PC-3 (cell line): ENCODE measurements at regions of chr12 and their contacts with region 1.

Region 1: DNA sequence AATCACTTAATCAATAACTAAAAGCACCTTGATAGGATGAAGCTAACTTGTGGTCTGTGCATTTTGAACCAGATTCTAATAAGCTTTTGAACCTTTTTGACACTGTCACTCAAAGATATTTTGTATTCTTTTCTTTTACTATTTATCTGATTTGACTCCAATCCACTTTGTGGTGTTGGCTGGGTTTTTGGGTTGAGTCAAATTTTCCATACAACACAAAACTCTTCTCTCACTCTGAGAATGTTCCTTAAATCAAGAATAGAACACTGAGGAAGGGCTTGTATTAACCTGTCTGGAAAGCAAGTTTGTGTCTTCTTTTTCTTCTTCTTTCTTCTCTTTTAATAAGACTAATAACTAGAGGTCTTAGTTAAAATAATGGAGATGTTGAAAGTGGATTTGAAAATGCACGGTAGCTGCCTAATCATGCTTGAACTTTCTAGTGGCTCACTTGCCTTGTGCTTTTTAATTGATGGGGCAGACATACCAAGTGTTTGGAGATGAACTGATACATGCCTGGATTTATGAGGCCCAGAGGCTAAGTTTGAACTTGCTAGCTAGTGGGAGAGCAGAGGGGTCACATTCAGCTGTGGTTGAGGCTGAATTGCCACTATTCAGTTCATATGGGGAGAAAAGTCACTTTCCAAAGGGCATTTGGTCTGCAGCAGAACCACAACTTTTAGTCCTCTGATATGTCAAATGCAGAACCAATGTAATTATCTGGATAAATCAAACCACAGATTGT is 93.5 kb upstream of the PTHLH start:
- DNase-seq: no peak
- ATAC-seq: no peak
- H3K4me3 ChIP-seq: no peak overlapping the region
- H3K27ac ChIP-seq: no peak overlapping the region
- H3K4me1 ChIP-seq: no peaks in the 10 kb centered on the region
- H3K27me3 ChIP-seq: no peaks in the 10 kb centered on the region
- CTCF ChIP-seq: no peak

Region 2: GRCh38 chr12:27984275-27984674 is 81.8 kb before region 1 on chr12:
- CTCF ChIA-PET with region 1: no interaction called
- POLR2A ChIA-PET with region 1: no interaction called
- intact Hi-C with region 1: loop called (anchors 2 kb)
- DNase-seq: peak; percentile 100
- ATAC-seq: peak; percentile 54
- H3K4me3 ChIP-seq: peak overlapping the region; percentile 6
- H3K27ac ChIP-seq: peak overlapping the region; percentile 73
- H3K4me1 ChIP-seq: peaks cover 47% of the 10 kb centered on the region
- H3K27me3 ChIP-seq: no peaks in the 10 kb centered on the region
- CTCF ChIP-seq: no peak

Region 3: DNA sequence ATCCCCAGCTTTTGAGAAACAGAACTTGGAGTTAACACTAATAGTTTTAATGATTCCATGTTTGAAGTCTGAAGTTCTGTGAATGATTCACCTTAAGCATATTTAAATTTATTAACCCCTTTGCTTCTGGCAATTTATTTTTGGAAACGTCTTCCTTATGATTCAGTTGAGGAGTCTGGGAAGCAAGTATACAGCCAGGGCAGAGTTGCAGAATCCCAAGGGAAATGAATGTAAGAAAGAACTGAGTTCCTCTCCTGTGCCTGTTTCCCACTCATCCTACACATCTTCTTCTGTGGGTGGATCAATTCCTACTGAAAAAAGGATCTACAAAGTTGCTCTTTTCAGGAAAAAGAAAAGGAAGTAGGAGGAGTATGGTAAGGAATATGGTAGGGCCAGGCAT is 16.0 kb after region 1 on chr12:
- CTCF ChIA-PET with region 1: no interaction called
- POLR2A ChIA-PET with region 1: no interaction called
- intact Hi-C with region 1: loop called (anchors 1 kb)
- DNase-seq: no peak
- ATAC-seq: no peak
- H3K4me3 ChIP-seq: no peak overlapping the region
- H3K27ac ChIP-seq: no peak overlapping the region
- H3K4me1 ChIP-seq: no peaks in the 10 kb centered on the region
- H3K27me3 ChIP-seq: no peaks in the 10 kb centered on the region
- CTCF ChIP-seq: no peak

Region 4: GRCh38 chr12:28652239-28652638 is 586.2 kb after region 1 on chr12:
- CTCF ChIA-PET with region 1: no interaction called
- POLR2A ChIA-PET with region 1: no interaction called
- intact Hi-C with region 1: loop called (anchors 10 kb)
- DNase-seq: peak; percentile 16
- ATAC-seq: no peak
- H3K4me3 ChIP-seq: peak overlapping the region; percentile 19
- H3K27ac ChIP-seq: no peak overlapping the region
- H3K4me1 ChIP-seq: peaks cover 3% of the 10 kb centered on the region; the same call in 1 of the 2 replicates
- H3K27me3 ChIP-seq: no peaks in the 10 kb centered on the region
- CTCF ChIP-seq: no peak

Region 5: GRCh38 chr12:28683356-28683755 is 617.3 kb after region 1 on chr12:
- CTCF ChIA-PET with region 1: no interaction called
- POLR2A ChIA-PET with region 1: no interaction called
- intact Hi-C with region 1: loop called (anchors 5 kb)
- DNase-seq: no peak
- ATAC-seq: no peak
- H3K4me3 ChIP-seq: no peak overlapping the region
- H3K27ac ChIP-seq: no peak overlapping the region
- H3K4me1 ChIP-seq: no peaks in the 10 kb centered on the region
- H3K27me3 ChIP-seq: no peaks in the 10 kb centered on the region
- CTCF ChIP-seq: no peak

Region 6: GRCh38 chr12:28963554-28963953 is 897.5 kb after region 1 on chr12:
- CTCF ChIA-PET with region 1: no interaction called
- POLR2A ChIA-PET with region 1: no interaction called
- intact Hi-C with region 1: loop called (anchors 5 kb)
- DNase-seq: peak; percentile 95
- ATAC-seq: peak; percentile 63
- H3K4me3 ChIP-seq: no peak overlapping the region
- H3K27ac ChIP-seq: no peak overlapping the region
- H3K4me1 ChIP-seq: peaks cover 19% of the 10 kb centered on the region
- H3K27me3 ChIP-seq: no peaks in the 10 kb centered on the region
- CTCF ChIP-seq: peak; percentile 100